ENCODE measurements at regions of chr9 and their contacts with region 1.

Region 1: DNA sequence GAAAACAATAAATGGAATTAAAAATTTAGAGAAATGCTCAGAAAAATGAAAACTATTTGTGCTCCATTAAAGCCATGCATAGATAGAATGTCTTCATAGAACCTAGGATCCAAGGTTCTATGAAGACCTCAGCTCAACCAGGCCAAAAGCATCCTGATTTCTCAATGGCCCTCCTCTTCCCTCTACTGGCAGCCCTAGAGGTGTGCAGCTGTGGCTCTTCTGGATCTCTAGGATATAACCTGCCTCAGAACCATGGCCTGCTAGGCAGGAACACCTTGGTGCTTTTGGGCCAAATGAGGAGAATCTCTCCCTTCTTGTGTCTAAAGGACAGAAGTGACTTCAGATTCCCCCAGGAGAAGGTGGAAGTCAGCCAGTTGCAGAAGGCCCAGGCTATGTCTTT is 15.1 kb downstream of the IFNA1 start:
- DNase-seq: peak; percentile 25
- ATAC-seq: peak; percentile 81
- H3K4me3 ChIP-seq: no peak overlapping the region
- H3K27ac ChIP-seq: no peak overlapping the region
- H3K4me1 ChIP-seq: peaks cover 2% of the 10 kb centered on the region; the same call in 1 of the 2 replicates
- H3K27me3 ChIP-seq: no peaks in the 10 kb centered on the region
- CTCF ChIP-seq: peak; percentile 57
- POLR2A ChIP-seq: no peak
- RAD21 ChIP-seq: peak; percentile 56

Region 2: DNA sequence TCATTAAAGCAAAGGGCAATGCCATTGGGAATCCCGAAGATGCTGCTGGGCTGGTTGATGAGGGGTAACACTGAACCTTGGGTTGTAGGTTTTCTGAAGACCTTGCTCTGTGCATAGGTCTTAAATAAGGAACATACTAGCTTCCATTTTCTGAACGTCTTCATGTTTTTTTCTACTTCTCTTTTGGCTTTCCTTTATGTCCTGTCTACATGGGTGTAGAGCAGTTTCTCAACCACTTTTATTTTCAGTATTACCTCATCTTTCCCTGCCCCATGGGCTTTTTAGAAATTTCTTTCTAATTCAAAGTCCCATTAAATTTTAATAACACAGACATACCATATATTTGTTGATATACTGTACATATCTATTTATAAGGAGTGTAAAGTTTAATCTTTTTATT is 215.4 kb before region 1 on chr9 and contains the start of gene IFNA14:
- CTCF ChIA-PET with region 1: interaction called, 5 read pairs
- POLR2A ChIA-PET with region 1: no interaction called
- dilution Hi-C with region 1: no loop called
- in situ Hi-C with region 1: no loop called
- intact Hi-C with region 1: loop called (anchors 5 kb)
- DNase-seq: no peak
- ATAC-seq: no peak
- H3K4me3 ChIP-seq: no peak within 1 kb of the TSS
- H3K27ac ChIP-seq: no peak within 1 kb of the TSS
- H3K4me1 ChIP-seq: no peaks in the 10 kb centered on the region
- H3K27me3 ChIP-seq: no peaks in the 10 kb centered on the region; the same call in 1 of the 2 replicates
- CTCF ChIP-seq: no peak
- POLR2A ChIP-seq: no peak
- RAD21 ChIP-seq: no peak
- total RNA-seq, gene IFNA14: not detected in 2 replicates